Posterior vena cava (tissue), 2 donors: ENCODE measurements at regions of chr2 and their contacts with region 1.

Region 1: GRCh38 chr2:155456222-155456621 is 757.7 kb downstream of the KCNJ3 start:
- DNase-seq: no peak

Region 2: GRCh38 chr2:155481141-155481540 is 24.9 kb after region 1 on chr2:
- intact Hi-C with region 1: loop called in 1 of 2 experiments (anchors 2 kb)
- DNase-seq: no peak